Caco-2 (cell line): ENCODE measurements at regions of chr11 and their contacts with region 1.

Region 1: DNA sequence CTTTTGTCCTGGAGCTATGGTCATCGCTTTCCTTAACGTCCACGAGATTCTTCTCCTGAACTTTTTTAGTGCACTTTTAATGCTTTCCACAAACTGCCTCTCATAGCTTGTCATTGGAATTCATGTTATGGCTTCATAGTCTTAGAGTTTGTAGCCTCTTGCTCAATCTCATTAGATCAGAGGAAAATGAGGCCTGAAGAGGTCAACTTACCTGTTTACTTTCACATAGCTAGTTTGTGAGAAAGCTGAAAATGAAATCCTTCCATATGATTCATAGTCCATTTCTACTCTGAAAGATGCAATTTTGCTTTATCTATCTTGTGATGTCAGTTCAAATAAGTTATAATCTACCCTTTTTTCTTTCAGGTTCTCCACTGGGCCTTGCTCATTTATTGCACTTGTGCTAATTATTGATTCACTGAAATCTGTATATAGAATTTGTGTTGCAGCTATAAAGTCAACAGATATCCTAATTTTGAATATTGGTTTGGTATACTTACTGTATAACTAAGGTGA is 1747.3 kb upstream of the RAG2 start:
- DNase-seq: peak in 1 of 2 experiments; percentile 42
- H3K4me3 ChIP-seq: no peak overlapping the region
- H3K4me3 Mint-ChIP-seq: no peak overlapping the region
- H3K27ac Mint-ChIP-seq: peak overlapping the region; percentile 81
- H3K4me1 ChIP-seq: peaks cover 32% of the 10 kb centered on the region
- H3K4me1 Mint-ChIP-seq: peaks cover 9% of the 10 kb centered on the region
- H3K27me3 ChIP-seq: no peaks in the 10 kb centered on the region
- H3K27me3 Mint-ChIP-seq: no peaks in the 10 kb centered on the region
- CTCF ChIP-seq: no peak

Region 2: GRCh38 chr11:38100836-38101462 is 244.4 kb before region 1 on chr11:
- CTCF ChIA-PET with region 1: no interaction called
- POLR2A ChIA-PET with region 1: no interaction called
- intact Hi-C with region 1: loop called (anchors 10 kb)
- DNase-seq: no peak
- H3K4me3 ChIP-seq: no peak overlapping the region
- H3K4me3 Mint-ChIP-seq: no peak overlapping the region
- H3K27ac Mint-ChIP-seq: no peak overlapping the region
- H3K4me1 ChIP-seq: no peaks in the 10 kb centered on the region
- H3K4me1 Mint-ChIP-seq: no peaks in the 10 kb centered on the region
- H3K27me3 ChIP-seq: no peaks in the 10 kb centered on the region
- H3K27me3 Mint-ChIP-seq: no peaks in the 10 kb centered on the region
- CTCF ChIP-seq: no peak

Region 3: DNA sequence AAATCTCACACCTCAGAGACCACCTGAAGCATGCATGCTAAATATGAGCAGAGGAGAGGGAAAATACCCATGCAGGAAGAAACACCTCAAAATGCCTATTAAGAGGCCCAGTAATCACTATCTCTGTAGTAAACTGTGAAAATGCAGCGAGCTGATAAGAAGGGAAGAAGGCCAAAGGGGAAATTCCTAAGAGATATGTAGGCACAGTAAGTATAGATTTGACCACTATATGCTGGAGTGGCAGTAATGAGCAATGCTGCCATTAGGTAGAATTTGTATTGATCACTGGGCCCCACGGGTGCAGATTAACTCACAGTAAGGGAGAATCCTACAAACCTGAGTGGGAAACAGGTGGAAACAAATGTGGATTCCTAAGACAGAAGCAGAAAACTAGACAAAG is 65.8 kb after region 1 on chr11:
- CTCF ChIA-PET with region 1: no interaction called
- POLR2A ChIA-PET with region 1: no interaction called
- intact Hi-C with region 1: loop called (anchors 2 kb)
- DNase-seq: peak; percentile 30 to 31
- H3K4me3 ChIP-seq: no peak overlapping the region
- H3K4me3 Mint-ChIP-seq: peak overlapping the region; percentile 38
- H3K27ac Mint-ChIP-seq: peak overlapping the region; percentile 3
- H3K4me1 ChIP-seq: peaks cover 16% of the 10 kb centered on the region
- H3K4me1 Mint-ChIP-seq: peaks cover 17% of the 10 kb centered on the region
- H3K27me3 ChIP-seq: no peaks in the 10 kb centered on the region
- H3K27me3 Mint-ChIP-seq: no peaks in the 10 kb centered on the region
- CTCF ChIP-seq: peak; percentile 35 to 51